ENCODE measurements at regions of chr16 and their contacts with region 1.

Region 1: DNA sequence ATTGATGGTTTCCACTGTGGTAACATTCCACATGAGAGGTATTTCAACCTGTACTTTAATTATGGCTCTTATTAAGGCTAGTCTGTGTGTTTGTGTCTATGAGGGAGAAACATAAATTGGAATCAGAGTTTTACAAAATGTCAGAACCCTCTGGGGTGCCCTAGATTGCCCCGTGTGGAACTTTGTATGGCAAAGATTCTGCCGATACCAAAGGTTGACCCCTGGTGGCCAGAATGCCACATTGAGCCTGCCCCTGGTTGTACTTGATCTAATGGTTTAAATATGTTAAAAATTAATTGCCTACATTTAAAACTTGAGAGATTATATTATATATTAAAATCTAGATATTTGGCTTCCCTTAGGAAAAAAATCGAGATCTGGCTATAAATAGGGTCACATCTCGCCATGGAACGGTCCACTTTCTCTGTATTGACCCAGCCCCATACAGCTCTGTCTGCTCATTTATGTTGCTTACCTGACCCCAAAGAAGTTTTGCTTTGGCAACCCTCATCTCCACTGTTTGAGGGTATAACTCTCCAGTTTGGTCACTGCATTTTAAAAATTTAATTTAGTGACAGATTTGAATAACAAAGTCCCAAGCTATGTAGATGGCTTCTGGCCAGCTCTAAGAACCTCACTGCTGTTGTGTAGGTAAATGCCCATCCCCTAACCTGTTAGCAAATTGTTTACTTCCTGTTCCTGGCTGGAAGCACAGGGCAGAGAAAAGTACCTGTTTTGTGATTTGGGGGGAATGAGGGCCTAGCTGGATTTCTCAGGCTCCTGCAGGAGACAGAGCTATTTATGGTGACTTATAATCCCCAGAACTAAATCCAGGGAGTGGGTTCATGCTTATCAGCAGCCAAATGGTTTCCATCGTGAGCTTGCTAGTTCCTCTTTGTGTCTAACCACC is 95.0 kb downstream of the PLCG2 start:
- DNase-seq: peak; percentile 73
- ATAC-seq: peak; percentile 91
- H3K4me3 ChIP-seq: no peak overlapping the region
- H3K27ac ChIP-seq: no peak overlapping the region
- H3K4me1 ChIP-seq: peaks cover 7% of the 10 kb centered on the region
- H3K27me3 ChIP-seq: no peaks in the 10 kb centered on the region
- CTCF ChIP-seq: peak; percentile 88

Region 2: DNA sequence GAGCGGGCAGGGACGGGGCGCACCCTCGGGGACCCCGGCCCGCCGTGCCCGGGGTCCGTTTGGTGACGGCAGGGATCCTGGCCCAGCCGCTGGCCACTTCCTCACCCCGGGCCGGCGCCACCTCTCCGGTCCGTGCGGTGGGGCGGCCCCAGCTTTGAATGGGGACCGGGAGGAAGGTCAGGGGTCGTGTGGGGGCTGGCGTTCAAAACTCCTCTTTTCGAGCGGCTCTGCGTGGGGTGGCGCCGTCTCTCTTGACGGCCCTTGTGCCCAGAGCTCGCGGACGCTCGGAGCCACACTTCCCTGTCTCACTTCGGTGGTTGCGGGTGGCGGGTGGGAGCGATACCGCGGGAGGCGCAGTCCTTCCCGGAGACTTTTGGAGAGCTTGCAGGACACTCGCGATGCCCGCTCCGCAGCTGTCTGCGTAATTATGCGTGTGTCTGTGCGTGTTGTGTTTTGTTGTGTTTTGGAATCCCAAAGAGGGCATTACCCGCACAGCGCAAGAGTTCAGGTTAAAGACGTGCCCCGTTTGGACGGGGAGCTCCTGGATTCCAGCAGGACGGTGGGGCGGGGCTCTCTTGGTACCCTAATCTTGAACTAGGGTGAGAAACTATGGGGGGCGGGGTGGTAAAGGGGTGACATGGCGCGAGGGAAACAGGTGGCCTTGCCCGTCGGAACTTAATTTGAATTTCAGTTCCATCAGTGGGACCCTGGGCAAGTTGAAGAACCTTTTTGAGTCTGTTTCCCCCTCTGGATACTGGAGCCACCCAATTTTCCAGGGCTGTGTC is 94.4 kb before region 1 on chr16:
- intact Hi-C with region 1: loop called (anchors 10 kb)
- DNase-seq: peak; percentile 80
- ATAC-seq: peak; percentile 59
- H3K4me3 ChIP-seq: peak overlapping the region; percentile 71
- H3K27ac ChIP-seq: peak overlapping the region; percentile 66
- H3K4me1 ChIP-seq: peaks cover 16% of the 10 kb centered on the region
- H3K27me3 ChIP-seq: no peaks in the 10 kb centered on the region
- CTCF ChIP-seq: no peak

Region 3: DNA sequence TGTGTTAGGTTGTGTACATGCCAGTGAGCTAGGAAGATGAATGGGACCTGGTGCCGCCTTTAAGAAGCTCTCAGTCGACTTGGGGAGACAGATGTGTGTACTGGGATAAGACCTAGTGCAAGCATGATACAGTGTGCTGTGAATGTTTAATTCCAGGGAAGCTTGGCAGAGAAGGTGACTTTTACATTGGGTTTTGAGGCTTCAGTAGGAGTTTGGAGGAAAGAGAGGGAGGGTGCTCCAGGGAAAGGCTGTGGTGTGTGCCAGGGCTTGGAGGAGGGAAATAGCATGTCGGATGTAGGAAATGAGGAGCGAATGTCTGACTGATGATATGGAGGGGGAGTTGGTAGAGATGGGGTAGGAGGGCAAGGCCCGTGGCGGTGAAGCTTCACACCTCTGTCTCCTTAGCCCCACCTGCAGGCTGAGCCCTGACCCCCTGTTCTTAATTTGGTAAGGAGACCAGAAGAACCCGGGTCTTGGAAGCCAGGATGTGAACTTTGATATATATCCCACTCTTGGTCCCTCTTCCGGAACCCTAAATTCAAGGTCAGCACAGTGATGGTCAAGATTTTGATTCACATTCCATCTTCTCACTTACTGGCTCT is 18.4 kb before region 1 on chr16:
- intact Hi-C with region 1: no loop called
- DNase-seq: no peak
- ATAC-seq: no peak
- H3K4me3 ChIP-seq: no peak overlapping the region
- H3K27ac ChIP-seq: no peak overlapping the region
- H3K4me1 ChIP-seq: no peaks in the 10 kb centered on the region
- H3K27me3 ChIP-seq: no peaks in the 10 kb centered on the region
- CTCF ChIP-seq: no peak

Region 4: GRCh38 chr16:81921085-81921814 is 47.2 kb after region 1 on chr16:
- intact Hi-C with region 1: no loop called
- DNase-seq: no peak
- ATAC-seq: no peak
- H3K4me3 ChIP-seq: no peak overlapping the region
- H3K27ac ChIP-seq: no peak overlapping the region
- H3K4me1 ChIP-seq: peaks cover 3% of the 10 kb centered on the region
- H3K27me3 ChIP-seq: no peaks in the 10 kb centered on the region
- CTCF ChIP-seq: no peak

Region 5: GRCh38 chr16:81975637-81976036 is 101.5 kb after region 1 on chr16:
- intact Hi-C with region 1: no loop called
- DNase-seq: no peak
- ATAC-seq: no peak
- H3K4me3 ChIP-seq: no peak overlapping the region
- H3K27ac ChIP-seq: no peak overlapping the region
- H3K4me1 ChIP-seq: no peaks in the 10 kb centered on the region
- H3K27me3 ChIP-seq: no peaks in the 10 kb centered on the region
- CTCF ChIP-seq: no peak

Measured in upper lobe of right lung (tissue), 1 donor.